ENCODE measurements at regions of chr19 and their contacts with region 1.

Region 1: DNA sequence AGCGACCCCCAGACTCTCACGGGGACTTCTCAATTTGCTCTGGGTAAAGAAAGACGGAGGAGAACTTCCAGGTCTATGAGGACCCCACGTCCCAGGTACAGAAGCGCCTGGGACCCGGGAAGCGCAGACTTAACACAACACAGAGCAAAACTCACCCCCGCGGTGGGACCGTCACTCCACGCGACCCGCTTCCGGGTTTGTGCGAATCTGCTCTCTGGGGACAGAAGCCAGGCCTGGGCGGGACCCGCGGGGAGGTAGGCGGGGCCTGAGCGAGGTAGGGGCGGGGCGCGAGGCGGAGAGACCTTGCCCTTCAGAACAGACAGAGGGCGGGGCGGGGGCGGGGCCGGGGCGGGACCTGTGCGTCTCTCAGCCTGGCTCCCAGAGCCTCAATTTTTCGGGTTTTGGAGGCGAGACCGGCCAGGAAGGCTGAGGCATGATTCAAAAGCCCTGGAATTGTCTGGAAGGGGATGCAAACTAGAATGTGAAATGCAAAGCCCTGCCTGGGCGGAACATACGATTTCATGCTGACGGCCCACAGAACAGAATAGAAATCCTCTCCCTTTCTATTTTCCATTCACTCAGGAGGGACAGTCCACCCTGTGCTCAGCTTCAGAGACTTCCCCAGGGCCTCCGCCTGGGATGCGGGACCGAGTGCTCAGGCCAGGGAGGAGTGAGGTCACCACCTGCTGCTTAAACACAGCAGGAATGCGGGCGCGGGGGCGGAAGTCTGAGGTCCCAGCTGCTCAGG is 19.3 kb upstream of the ZNF888 start:
- DNase-seq: peak; percentile 89 to 97 (median 94)
- ATAC-seq: peak; percentile 99
- H3K4me3 ChIP-seq: peak overlapping the region; percentile 92
- H3K4me3 Mint-ChIP-seq: peak overlapping the region; percentile 97
- H3K27ac ChIP-seq: peak overlapping the region; percentile 35 to 78
- H3K27ac Mint-ChIP-seq: peak overlapping the region; percentile 91
- H3K4me1 ChIP-seq: peaks cover 24% of the 10 kb centered on the region
- H3K4me1 Mint-ChIP-seq: peaks cover 29% of the 10 kb centered on the region
- H3K27me3 ChIP-seq: no peaks in the 10 kb centered on the region
- H3K27me3 Mint-ChIP-seq: no peaks in the 10 kb centered on the region
- CTCF ChIP-seq: no peak

Region 2: GRCh38 chr19:52786457-52787359 is 155.9 kb before region 1 on chr19 and contains the start of gene ZNF600:
- CTCF ChIA-PET with region 1: no interaction called
- POLR2A ChIA-PET with region 1: no interaction called
- intact Hi-C with region 1: loop called in 1 of 2 experiments (anchors 10 kb)
- DNase-seq: peak; percentile 26 to 87 (median 68)
- ATAC-seq: peak; percentile 92
- H3K4me3 ChIP-seq: peak within 1 kb of the TSS; percentile 79
- H3K4me3 Mint-ChIP-seq: peak within 1 kb of the TSS; percentile 93
- H3K27ac ChIP-seq: peak within 1 kb of the TSS; percentile 46 to 70
- H3K27ac Mint-ChIP-seq: peak within 1 kb of the TSS; percentile 82
- H3K4me1 ChIP-seq: peaks cover 23% of the 10 kb centered on the region
- H3K4me1 Mint-ChIP-seq: peaks cover 34% of the 10 kb centered on the region
- H3K27me3 ChIP-seq: no peaks in the 10 kb centered on the region
- H3K27me3 Mint-ChIP-seq: no peaks in the 10 kb centered on the region
- CTCF ChIP-seq: no peak
- total RNA-seq, gene ZNF600: 11.2 to 13.4 TPM

Region 3: GRCh38 chr19:52823676-52824075 is 118.9 kb before region 1 on chr19:
- CTCF ChIA-PET with region 1: no interaction called
- POLR2A ChIA-PET with region 1: no interaction called
- intact Hi-C with region 1: no loop called
- DNase-seq: no peak
- ATAC-seq: no peak
- H3K4me3 ChIP-seq: no peak overlapping the region
- H3K4me3 Mint-ChIP-seq: no peak overlapping the region
- H3K27ac ChIP-seq: no peak overlapping the region
- H3K27ac Mint-ChIP-seq: no peak overlapping the region
- H3K4me1 ChIP-seq: peaks cover 9% of the 10 kb centered on the region
- H3K4me1 Mint-ChIP-seq: peaks cover 13% of the 10 kb centered on the region
- H3K27me3 ChIP-seq: no peaks in the 10 kb centered on the region
- H3K27me3 Mint-ChIP-seq: no peaks in the 10 kb centered on the region
- CTCF ChIP-seq: no peak

Region 4: DNA sequence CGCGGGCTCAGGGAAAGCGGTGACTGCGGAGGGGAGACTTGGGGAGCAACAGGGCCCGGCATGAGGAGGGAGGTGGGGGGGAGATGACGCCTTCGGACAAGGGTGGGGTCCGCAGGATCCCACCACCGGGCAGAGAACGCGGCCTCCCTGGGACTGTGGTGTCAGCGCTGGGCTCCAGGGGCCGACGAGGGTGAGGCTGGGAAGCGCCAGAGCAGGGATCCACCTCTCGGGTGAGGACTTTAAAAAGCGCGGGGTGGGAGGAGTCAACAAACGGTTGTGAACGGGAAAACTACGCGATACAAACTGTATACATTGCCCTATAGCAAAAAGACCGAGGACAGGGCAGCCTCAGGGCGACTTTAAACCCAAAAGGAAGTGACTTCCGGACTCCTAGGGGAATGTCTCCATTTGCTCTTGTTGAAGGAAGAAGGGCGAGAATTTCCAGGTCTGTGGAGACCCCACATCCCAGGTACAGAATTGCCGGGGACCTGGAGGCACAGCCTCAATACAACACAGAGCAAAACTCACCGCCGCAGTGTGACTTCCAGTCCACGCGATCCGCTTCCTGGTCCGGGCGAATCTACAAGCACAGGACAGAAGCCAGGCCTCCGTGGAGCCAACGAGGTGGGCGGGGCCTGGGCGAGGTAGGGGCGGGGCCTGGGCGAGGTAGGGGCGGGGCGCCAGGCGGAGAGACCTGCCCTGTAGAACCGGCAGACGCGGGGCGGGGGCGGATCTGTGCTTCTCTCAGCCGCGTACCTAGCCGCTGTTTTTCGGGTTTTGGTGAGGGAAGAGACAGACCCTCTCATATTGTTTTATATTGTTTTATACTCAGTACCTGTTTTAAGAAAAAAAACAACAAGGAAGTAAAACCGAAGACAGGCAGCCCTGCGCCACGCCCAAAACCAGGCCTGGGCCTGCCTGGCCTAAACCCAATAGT is 19.5 kb before region 1 on chr19 and contains the start of gene ZNF888:
- CTCF ChIA-PET with region 1: no interaction called
- POLR2A ChIA-PET with region 1: no interaction called
- intact Hi-C with region 1: loop called (anchors 1 to 2 kb)
- DNase-seq: peak; percentile 71 to 92 (median 78)
- ATAC-seq: peak; percentile 99
- H3K4me3 ChIP-seq: peak within 1 kb of the TSS; percentile 68
- H3K4me3 Mint-ChIP-seq: peak within 1 kb of the TSS; percentile 96
- H3K27ac ChIP-seq: peak within 1 kb of the TSS in 1 of 2 donors; percentile 38
- H3K27ac Mint-ChIP-seq: peak within 1 kb of the TSS; percentile 89
- H3K4me1 ChIP-seq: peaks cover 22% of the 10 kb centered on the region
- H3K4me1 Mint-ChIP-seq: peaks cover 34% of the 10 kb centered on the region
- H3K27me3 ChIP-seq: peaks cover 0 to 2% of the 10 kb centered on the region in 2 experiments
- H3K27me3 Mint-ChIP-seq: no peaks in the 10 kb centered on the region
- CTCF ChIP-seq: no peak
- total RNA-seq, gene ZNF888: 2.5 to 3.0 TPM

Region 5: DNA sequence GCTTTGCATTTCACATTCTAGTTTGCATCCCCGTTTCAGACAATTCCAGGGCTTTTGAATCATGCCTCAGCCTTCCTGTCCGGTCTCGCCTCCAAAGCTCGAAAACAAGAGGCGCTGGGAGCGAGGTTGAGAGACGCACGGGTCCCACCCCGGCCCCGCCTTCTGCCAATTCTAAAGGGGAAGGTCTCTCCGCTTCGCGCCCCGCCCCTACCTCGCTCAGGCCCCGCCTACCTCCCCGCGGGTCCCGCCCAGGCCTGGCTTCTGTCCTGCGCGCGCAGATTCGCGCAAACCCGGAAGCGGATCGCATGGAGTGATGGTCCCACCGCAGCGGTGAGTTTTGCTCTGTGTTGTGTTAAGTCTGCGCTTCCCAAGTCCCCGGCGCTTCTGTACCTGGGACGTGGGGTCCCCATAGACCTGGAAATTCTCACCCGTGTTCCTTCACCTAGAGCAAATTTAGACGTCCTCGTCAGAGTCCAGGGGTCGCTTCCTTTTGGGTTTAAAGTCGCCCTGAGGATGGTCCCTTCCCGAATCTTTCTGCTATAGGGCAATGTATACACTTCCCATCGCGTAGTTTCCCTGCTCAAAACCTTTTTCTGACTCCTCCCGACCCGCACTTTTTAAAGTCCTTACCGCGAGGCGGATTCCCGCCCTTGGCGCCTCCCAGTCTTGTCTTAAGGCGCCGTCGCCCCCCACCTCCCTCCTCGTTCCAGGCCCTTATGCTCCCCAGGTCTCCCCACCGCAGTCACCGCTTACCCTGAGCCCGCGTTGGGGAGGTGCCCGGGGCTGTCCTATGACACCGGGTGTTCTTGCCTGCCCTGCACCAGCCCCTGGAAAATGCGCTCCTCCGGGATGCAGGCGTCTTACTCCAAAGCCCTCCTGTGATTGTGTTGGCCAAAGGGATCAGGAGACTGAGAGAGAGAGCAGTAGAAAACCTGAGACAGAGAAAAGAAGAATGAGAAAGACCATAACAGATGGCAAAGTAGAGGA is 391.2 kb after region 1 on chr19 and contains the start of gene ZNF845:
- CTCF ChIA-PET with region 1: no interaction called
- POLR2A ChIA-PET with region 1: no interaction called
- intact Hi-C with region 1: loop called in 1 of 2 experiments (anchors 10 kb)
- DNase-seq: peak; percentile 91 to 99 (median 95)
- ATAC-seq: peak; percentile 97
- H3K4me3 ChIP-seq: peak within 1 kb of the TSS; percentile 82
- H3K4me3 Mint-ChIP-seq: peak within 1 kb of the TSS; percentile 95
- H3K27ac ChIP-seq: peak within 1 kb of the TSS in 1 of 2 donors; percentile 72
- H3K27ac Mint-ChIP-seq: peak within 1 kb of the TSS; percentile 84
- H3K4me1 ChIP-seq: peaks cover 17% of the 10 kb centered on the region
- H3K4me1 Mint-ChIP-seq: peaks cover 22% of the 10 kb centered on the region
- H3K27me3 ChIP-seq: peaks cover 0 to 4% of the 10 kb centered on the region in 2 experiments
- H3K27me3 Mint-ChIP-seq: peaks cover 8% of the 10 kb centered on the region
- CTCF ChIP-seq: no peak
- total RNA-seq, gene ZNF845: 7.5 to 8.0 TPM